Activated naive CD4-positive, alpha-beta T cell treated with anti-CD3 and anti-CD28 coated beads for 36 hours (primary cell): ENCODE measurements at regions of chr1 and their contacts with region 1.

Region 1: GRCh38 chr1:23800400-23801337 is at the start of gene GALE:
- DNase-seq: peak; percentile 98
- H3K4me3 Mint-ChIP-seq: peak within 1 kb of the TSS; percentile 92
- H3K27ac Mint-ChIP-seq: peak within 1 kb of the TSS; percentile 80
- H3K4me1 Mint-ChIP-seq: peaks cover 11% of the 10 kb centered on the region
- H3K27me3 Mint-ChIP-seq: no peaks in the 10 kb centered on the region
- total RNA-seq, gene GALE: 19.7 to 23.1 TPM

Region 2: GRCh38 chr1:23691499-23692307 is 109.0 kb before region 1 on chr1 and contains the start of gene RPL11:
- CTCF ChIA-PET with region 1: no interaction called
- intact Hi-C with region 1: loop called (anchors 1 kb)
- DNase-seq: peak; percentile 93
- H3K4me3 Mint-ChIP-seq: peak within 1 kb of the TSS; percentile 95
- H3K27ac Mint-ChIP-seq: peak within 1 kb of the TSS; percentile 97
- H3K4me1 Mint-ChIP-seq: peaks cover 43% of the 10 kb centered on the region
- H3K27me3 Mint-ChIP-seq: peaks cover under 1% of the 10 kb centered on the region
- total RNA-seq, gene RPL11: 1,701 to 1,742 TPM

Region 3: DNA sequence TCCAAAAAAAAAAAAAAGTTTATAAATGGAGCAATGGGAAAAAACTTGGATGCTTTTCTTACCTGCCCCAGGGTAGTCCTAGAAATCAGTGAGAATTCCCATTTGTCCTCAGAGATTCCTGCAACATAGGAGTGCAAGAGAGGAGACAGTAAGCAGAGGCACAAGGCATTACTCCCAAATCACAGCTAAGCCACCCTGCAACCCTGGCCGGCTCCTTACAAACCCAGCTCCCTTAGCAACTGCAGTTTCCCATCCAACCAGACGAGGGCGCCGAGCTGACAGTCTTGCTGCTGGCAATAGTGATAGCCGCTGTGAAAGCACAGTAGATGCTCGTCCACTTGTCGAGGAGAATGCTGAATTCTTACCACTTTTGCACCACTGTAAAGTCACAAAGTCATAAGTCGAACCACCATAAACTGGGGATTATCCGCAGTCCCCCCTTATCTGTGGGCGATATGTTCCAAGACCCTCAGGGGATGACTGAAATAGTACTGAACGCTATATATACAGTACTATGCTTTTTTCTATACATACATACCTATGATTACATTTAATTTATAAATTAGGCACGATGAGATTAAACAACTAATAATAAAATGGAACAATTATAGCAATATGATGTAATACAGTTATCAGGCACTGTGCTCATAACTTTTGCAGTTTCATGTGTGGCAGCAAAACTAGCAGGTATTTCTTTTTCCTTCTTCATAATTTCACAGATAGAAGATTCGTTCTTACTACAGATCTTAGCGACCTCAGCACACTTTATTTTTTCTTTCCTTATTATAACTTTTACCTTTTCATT is 28.4 kb before region 1 on chr1:
- CTCF ChIA-PET with region 1: interaction called, 23 read pairs
- intact Hi-C with region 1: no loop called
- DNase-seq: peak; percentile 95
- H3K4me3 Mint-ChIP-seq: no peak overlapping the region
- H3K27ac Mint-ChIP-seq: no peak overlapping the region
- H3K4me1 Mint-ChIP-seq: peaks cover 31% of the 10 kb centered on the region
- H3K27me3 Mint-ChIP-seq: no peaks in the 10 kb centered on the region

Region 4: DNA sequence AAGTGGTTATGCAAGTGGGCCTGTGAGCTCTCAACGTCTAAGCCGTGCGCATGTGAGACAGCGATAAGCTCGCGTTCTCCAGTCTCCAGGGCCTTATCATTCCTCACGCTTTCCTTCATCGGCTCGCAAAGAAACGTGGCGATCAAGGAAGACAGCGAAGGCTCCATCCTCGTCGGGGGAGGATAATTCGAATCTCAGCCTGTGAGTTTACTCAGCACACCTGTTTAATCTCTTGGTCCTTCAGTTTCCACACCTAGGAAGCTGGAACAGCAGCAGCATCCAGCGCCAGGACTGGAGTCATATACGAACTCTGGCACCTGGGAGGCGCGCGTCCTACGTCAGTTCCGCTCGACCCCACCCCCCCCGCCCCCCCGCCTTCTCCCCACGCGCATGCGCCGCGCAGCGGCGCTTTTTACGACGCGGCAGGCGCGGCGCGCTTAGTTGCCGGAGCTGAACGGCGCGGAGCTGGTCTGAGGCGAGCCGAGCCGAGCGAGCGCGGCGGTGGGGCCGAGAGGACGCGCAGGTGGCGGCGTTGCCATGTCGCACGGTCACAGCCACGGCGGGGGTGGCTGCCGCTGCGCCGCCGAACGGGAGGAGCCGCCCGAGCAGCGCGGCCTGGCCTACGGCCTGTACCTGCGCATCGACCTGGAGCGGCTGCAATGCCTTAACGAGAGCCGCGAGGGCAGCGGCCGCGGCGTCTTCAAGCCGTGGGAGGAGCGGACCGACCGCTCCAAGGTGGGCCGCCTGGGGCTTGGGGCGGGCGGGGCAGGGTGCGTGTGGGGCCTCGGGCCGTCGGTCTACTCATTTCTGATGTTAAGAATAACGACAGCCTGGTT is 22.5 kb before region 1 on chr1 and contains the start of gene PITHD1:
- CTCF ChIA-PET with region 1: no interaction called
- intact Hi-C with region 1: loop called (anchors 1 kb)
- DNase-seq: peak; percentile 81
- H3K4me3 Mint-ChIP-seq: peak within 1 kb of the TSS; percentile 86
- H3K27ac Mint-ChIP-seq: peak within 1 kb of the TSS; percentile 88
- H3K4me1 Mint-ChIP-seq: peaks cover 50% of the 10 kb centered on the region
- H3K27me3 Mint-ChIP-seq: no peaks in the 10 kb centered on the region
- total RNA-seq, gene PITHD1: 73.8 to 75.1 TPM

Region 5: DNA sequence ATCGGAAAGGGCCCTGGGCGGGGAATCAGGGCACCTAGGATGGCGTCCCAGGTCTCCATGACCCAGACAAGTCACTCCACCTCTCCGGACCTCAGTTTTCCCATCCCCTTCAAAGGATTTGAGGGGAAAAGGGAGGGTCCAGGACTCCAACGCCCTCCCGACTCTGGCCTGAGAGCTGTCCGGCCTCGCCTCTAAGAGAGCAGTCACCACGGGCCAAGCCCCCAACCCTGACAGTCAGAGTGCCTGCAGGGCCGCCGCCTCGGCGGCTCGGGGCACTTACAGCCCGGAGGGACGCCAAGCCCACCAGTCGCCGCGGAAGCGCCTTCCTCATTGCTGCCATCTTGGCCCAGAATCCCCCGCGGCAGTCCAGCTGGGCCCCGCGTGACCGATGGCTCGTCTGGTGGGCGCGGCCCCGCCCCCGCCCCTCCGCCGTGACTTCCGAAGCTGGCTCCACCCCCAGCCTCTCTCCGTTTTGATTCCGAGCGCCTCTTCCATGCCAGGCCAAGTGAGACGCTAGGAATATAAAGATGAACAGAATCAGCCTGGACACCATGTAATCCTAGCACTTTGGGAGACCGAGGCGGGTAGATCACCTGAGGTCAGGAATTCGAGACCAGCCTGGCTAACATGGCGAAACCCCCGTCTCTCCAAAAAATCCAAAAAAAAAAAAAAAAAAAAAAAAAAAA is 24.6 kb after region 1 on chr1 and contains the start of gene HMGCL:
- CTCF ChIA-PET with region 1: interaction called, 4 read pairs
- intact Hi-C with region 1: loop called (anchors 1 kb)
- DNase-seq: peak; percentile 92
- H3K4me3 Mint-ChIP-seq: peak within 1 kb of the TSS; percentile 91
- H3K27ac Mint-ChIP-seq: peak within 1 kb of the TSS; percentile 92
- H3K4me1 Mint-ChIP-seq: peaks cover 15% of the 10 kb centered on the region
- H3K27me3 Mint-ChIP-seq: no peaks in the 10 kb centered on the region
- total RNA-seq, gene HMGCL: 31.5 to 34.5 TPM

Region 6: DNA sequence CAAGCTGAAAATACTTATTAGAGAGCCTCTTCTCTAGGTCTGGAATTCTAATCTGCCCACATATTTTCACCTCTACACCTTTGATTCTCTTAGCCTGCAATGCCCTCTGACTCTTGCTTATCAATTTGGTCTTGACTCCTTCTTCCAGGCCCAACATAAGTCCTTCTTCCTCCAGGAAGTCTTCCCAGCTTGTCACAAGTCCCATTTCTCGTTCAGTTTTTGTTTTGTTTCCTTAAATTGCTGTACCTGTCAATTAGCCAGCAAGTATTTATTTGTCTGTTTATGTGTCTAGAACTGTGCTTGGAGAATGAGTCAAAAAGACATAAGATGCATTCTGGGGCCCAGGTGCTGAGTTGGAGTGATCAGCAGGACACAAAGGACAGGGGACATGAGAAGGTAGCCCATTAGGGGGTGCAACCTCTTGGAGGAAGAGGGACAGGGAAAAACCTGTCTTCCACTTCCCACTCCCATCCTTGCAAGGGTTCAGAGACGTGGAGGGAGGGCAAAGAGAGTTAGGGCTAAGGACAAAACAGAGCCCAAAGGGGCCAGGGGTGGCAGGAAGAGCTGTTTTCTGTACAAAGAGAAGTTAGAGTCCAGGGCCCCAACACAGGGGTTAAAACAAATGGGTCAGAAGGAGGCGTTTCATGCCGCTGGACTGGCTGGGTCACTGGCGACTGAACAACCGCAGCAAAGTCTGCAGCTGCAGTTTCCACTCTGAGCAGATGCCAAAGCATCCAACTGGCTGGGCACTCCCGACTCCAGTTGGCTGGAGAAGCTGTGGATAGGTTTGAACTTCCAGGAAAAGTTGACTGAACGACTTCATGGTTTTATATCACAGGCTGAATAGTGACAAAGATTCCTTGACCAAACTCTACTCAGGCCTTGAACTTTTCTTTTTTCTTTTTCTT is 123.2 kb after region 1 on chr1:
- CTCF ChIA-PET with region 1: no interaction called
- intact Hi-C with region 1: no loop called
- DNase-seq: no peak
- H3K4me3 Mint-ChIP-seq: no peak overlapping the region
- H3K27ac Mint-ChIP-seq: no peak overlapping the region
- H3K4me1 Mint-ChIP-seq: peaks cover 2% of the 10 kb centered on the region
- H3K27me3 Mint-ChIP-seq: no peaks in the 10 kb centered on the region

Region 7: DNA sequence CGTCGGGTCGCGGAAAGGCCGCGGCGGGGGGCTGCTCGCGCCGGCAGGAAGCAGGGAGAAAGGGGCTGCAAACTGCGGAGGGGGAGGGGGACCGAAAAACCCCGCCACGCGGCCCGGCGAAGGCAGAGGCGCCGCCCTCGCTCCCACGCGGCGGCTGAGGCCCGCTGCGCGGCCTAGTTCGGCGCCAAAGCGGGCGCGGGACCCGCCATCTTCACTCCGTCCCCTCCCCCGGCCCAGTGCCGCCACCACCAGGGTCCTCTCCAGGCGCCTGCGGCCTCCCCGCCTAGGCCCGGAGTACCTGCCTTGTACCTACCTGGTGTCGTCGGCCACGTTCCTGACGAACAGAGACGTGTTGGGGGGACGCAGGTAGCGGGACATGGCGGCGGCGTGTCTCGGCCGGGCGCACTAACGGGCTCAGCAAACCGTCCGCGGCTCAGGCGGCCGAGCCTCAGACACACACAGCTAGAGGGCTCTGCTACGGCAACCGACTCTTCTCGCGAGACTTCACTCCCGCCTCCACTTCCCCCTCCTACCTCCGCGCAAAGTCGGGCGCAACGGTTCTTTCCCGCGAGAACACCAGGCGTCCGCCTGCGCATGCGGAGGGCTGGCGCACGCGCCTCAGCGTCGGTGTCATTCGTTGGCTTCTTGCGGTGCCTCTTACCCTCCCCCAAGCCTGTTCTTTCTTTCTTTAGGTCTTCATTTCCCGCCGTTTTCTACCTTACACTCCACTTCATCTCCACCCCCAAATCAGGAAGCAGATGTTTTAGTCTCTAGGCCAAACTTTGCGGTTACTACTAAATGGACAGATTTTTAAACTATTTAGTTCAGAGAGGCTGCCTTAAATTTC is 179.4 kb after region 1 on chr1 and contains the start of gene SRSF10:
- CTCF ChIA-PET with region 1: no interaction called
- intact Hi-C with region 1: loop called (anchors 1 kb)
- DNase-seq: peak; percentile 99
- H3K4me3 Mint-ChIP-seq: peak within 1 kb of the TSS; percentile 94
- H3K27ac Mint-ChIP-seq: peak within 1 kb of the TSS; percentile 99
- H3K4me1 Mint-ChIP-seq: peaks cover 31% of the 10 kb centered on the region
- H3K27me3 Mint-ChIP-seq: no peaks in the 10 kb centered on the region
- total RNA-seq, gene SRSF10: 169 to 178 TPM